Body of pancreas (tissue), 4 donors: ENCODE measurements at regions of chr5 and their contacts with region 1.

Region 1: DNA sequence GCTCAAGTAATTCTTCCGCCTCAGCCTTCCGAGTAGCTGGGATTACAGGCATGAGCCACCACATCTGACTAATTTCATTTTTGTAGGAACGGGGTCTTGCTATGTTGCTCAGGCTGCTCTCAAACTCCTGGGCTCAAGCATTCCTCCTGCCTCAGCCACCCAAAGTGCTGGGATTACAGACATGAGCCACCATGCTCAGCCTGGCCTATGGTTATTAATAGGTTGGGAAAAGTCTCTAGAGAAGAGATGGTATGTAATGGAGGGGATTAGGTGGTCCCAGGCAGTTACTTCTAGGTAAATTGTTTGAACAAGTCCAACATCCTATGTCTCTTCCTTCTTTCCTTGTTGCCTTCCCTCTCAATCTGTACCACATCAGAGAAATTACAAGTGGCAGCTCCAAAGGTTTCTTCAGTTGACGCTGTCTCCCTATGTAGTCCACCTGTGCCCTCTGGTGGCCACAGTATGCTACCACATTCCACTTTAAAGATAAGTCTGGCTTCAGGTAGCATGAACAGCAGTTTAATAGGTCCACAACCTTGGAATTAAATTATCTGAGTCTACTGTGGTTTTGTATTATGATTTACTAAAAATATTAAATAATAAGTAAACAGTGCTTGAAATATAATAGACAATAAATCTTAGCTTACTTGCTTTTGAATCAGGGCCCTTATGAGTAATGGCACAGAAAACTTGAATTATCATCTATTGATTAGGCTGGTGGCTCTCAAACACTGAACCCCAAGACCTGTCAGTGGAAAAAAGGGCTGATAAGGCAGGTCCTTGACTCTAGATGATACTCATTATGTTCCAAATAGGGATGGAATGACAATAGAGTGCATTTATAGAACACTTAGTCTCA is 9.7 kb downstream of the TIGD6 start:
- DNase-seq: peak; percentile 83 to 88 (median 85)
- ATAC-seq: peak; percentile 94
- H3K4me3 ChIP-seq: no peak overlapping the region
- H3K27ac ChIP-seq: no peak overlapping the region
- H3K4me1 ChIP-seq: no peaks in the 10 kb centered on the region
- H3K27me3 ChIP-seq: no peaks in the 10 kb centered on the region
- CTCF ChIP-seq: peak; percentile 81 to 98 (median 92)
- POLR2A ChIP-seq: no peak

Region 2: DNA sequence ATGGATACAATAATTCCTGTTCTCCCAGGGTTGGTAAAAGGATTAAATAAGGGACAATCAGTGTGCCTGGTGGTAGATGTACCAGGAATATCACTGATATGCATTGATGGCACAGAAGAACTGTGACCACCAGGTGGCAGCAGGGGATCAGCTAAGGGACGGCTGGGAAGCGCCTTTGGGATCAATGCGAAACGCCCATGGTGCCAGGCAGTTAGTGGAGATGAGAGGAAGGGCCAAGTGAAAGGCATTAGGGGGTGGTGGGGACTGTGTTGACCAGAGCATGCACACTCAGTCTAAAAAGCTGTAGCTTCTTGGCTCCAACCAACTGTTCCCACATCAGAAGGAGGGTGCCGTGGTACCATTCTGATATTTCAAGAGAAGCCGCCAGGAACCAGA is 353.9 kb before region 1 on chr5:
- intact Hi-C with region 1: loop called (anchors 10 kb)
- DNase-seq: peak; percentile 34 to 82 (median 50)
- ATAC-seq: peak; percentile 74
- H3K4me3 ChIP-seq: no peak overlapping the region
- H3K27ac ChIP-seq: no peak overlapping the region
- H3K4me1 ChIP-seq: no peaks in the 10 kb centered on the region
- H3K27me3 ChIP-seq: no peaks in the 10 kb centered on the region
- CTCF ChIP-seq: peak in 6 of 7 experiments; percentile 46 to 93 (median 82)
- POLR2A ChIP-seq: no peak

Region 3: DNA sequence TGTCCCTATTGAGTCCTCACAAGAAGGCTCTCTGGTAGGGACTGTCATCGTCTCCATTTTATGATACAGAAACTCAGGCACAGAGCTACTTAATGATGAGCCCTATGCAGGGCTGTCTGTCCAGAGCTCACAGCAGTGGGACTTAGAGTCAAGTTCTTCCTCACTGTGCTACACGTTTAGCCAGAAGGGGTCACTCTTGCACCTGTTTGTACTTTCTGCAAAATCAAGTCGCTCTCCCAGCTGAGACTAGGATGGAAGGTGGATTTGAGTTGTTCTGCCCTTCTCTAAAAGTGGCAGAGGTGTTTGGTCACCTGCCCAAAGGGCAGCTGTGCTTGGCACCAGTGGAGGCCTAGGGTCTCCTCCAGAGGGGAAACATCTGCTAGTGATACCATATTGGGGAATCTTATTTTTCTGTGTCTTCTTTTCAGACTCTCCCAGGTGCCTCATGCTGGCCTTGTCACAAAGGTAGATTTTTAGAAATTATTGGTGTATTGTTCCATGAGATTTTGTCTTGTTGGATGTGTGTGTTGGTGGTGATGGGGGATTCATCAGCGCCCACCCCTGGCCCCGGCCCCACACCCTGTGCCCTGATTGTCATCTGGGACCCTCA is 156.4 kb before region 1 on chr5:
- intact Hi-C with region 1: loop called (anchors 5 kb)
- DNase-seq: peak; percentile 69 to 84 (median 73)
- ATAC-seq: peak; percentile 63
- H3K4me3 ChIP-seq: no peak overlapping the region
- H3K27ac ChIP-seq: no peak overlapping the region
- H3K4me1 ChIP-seq: no peaks in the 10 kb centered on the region
- H3K27me3 ChIP-seq: no peaks in the 10 kb centered on the region
- CTCF ChIP-seq: peak; percentile 33 to 71 (median 68)
- POLR2A ChIP-seq: no peak

Region 4: GRCh38 chr5:149940077-149940574 is 50.6 kb before region 1 on chr5:
- intact Hi-C with region 1: loop called (anchors 10 kb)
- DNase-seq: no peak
- ATAC-seq: no peak
- H3K4me3 ChIP-seq: no peak overlapping the region
- H3K27ac ChIP-seq: peak overlapping the region in 1 of 4 donors; percentile 52
- H3K4me1 ChIP-seq: peaks cover 21% of the 10 kb centered on the region
- H3K27me3 ChIP-seq: no peaks in the 10 kb centered on the region
- CTCF ChIP-seq: no peak
- POLR2A ChIP-seq: no peak